Posterior cingulate gyrus (tissue), 11 donors: ENCODE measurements at regions of chr1 and their contacts with region 1.

Region 1: DNA sequence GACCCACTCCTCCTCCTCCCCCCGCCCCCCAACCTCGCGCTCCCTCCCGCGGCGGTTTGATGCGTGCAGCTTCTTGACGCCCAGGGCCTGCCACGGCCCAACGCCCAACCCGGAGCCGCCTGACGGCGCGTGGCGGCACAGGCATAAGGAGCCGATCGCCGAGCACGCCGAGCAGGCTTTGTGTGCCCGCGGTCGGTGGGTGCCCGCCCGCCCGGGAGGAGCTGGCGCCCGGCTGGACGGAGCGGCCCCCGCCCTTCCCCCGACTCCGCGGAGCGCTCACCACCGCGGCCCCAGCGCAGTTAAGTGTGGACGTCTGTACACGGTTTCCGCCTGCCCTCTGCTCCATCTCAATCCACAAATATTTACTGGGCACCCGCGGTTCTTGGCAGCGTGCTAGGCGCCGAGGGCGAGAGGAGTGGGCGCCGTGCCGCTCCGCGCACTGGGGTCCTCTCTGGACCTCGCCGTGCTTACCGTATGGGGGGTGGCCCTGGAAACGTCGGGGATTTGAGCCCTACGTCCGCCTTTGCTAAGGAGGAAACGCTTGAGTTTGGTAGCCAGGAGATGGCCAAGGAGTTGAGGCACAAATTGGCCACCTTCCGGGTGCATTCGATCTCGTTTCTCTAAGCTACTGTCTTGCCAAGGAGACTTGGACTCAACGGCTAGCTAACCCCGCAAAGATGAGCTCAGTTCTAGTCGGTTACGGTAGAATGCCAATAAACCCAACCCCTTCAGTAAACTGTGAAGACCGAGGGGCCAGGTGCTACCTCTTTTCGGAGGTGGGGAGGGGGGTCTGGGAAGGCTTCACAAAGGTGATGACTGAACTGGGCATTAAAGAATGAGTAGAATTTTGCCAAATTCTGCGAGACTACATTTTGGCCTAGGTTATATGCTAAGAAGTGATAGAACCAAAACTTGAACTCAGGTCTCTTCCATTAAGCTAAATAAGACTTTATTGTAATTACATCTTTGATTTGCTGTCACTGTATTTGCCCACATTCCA is 583 bp upstream of the HDGF start:
- DNase-seq: peak; percentile 95 to 100 (median 98)

Region 2: GRCh38 chr1:156054500-156055280 is 697.4 kb before region 1 on chr1 and contains the start of gene LAMTOR2:
- intact Hi-C with region 1: no loop called
- DNase-seq: peak; percentile 98 to 100 (median 98)

Region 3: DNA sequence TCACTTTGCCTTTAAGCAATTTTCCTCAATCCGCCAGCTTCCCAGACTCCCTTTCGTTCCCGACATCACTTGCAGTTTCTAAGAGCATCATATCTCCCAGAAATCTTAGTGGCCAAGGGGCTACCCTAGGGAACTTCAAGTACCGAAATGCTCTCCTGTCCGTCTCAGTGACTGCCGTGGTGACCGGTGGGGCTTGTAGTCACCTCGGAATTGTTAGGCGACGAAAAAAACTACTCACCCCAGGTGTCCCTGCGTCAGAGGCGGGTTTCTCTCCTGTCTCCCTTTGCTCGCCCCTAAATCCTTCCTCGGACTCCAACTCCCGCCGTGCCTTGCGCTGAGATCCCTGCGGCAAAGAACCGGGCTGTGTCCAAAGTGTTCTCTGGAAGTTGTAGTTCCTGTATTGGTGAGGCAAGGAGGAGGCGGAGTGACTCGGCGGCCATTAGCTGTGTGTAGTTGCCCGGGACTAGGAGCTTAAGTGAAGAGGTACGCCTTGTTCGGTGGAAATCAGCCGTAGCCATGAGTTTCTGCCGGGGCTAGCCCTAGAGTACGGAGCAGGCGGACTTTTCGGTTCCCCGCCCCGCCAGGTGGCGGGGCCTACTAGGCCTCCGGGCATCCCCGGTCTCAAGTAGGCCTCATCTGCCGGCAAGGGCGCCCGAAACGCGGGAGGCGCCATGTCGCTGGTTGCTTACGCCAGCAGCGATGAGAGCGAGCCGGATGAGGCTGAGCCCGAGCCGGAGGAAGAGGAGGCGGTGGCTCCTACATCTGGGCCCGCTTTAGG is 15.2 kb after region 1 on chr1 and contains the start of gene PRCC:
- intact Hi-C with region 1: loop called (anchors 1 kb)
- DNase-seq: peak; percentile 99 to 100 (median 100)

Region 4: GRCh38 chr1:157045251-157046218 is 293.5 kb after region 1 on chr1 and contains the start of gene ARHGEF11:
- intact Hi-C with region 1: loop called (anchors 10 kb)
- DNase-seq: peak; percentile 78 to 99 (median 90)